Activated T-helper 2 cell treated with anti-CD3 and anti-CD28 coated beads, Interferon-gamma antibody, Interleukin-2, Interleukin-4, amounts not matched to agents 10 μg/mL and 5 μg/mL and 100 μg/mL, durations not matched to agents 14 hours and 24 hours and 36 hours (primary cell): ENCODE measurements at regions of chr11 and their contacts with region 1.

Region 1: DNA sequence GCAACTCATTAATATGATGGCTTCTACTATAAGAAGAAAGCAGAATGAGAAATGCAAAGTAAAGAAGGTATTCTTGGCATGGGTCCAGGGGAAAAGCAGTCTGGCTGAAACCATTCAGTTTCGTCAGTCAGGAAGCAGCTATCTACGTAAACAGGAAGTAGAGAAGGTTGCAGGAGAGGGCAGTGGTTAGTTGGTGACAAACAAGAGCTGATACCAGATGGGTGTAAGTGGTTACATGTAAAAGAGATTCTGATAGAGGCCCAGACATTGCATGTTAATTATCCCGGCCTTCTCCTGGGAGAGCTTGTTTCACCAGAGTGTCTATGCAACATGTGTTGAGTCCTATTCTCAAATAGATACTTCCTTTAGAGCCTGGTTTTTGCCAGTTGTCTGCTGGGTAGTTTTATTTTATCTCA is 58.4 kb upstream of the PSMA1 start:
- DNase-seq: peak; percentile 71
- H3K4me3 Mint-ChIP-seq: peak overlapping the region; percentile 42
- H3K27ac Mint-ChIP-seq: peak overlapping the region; percentile 87
- H3K4me1 Mint-ChIP-seq: peaks cover 45% of the 10 kb centered on the region
- H3K27me3 Mint-ChIP-seq: no peaks in the 10 kb centered on the region

Region 2: GRCh38 chr11:14336507-14337503 is 241.7 kb before region 1 on chr11:
- intact Hi-C with region 1: loop called (anchors 5 kb)
- DNase-seq: no peak
- H3K4me3 Mint-ChIP-seq: no peak overlapping the region
- H3K27ac Mint-ChIP-seq: peak overlapping the region; percentile 80
- H3K4me1 Mint-ChIP-seq: peaks cover 47% of the 10 kb centered on the region
- H3K27me3 Mint-ChIP-seq: no peaks in the 10 kb centered on the region

Region 3: DNA sequence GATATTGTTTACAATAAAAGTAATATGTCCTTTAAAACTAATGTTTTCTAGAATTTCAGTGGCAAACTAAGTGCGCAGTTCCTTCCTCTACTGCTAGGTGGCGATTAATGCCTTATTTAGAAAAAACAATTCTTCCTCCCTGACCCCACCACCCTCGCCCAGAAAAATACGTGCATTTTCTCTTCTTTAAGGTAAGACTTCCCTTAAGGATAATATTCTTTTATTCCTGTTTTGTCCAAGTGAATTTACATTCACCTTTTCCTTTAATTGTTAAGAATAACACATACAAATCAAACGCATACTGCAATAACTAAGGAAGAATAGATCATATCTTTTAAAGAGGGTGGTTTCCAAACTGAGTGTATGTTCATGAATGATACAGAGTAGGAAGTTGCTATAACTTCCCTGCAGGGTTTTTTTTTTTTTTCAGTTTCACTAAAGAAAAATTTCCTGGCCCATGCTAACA is 41.4 kb before region 1 on chr11:
- intact Hi-C with region 1: loop called (anchors 2 kb)
- DNase-seq: no peak
- H3K4me3 Mint-ChIP-seq: peak overlapping the region; percentile 63
- H3K27ac Mint-ChIP-seq: peak overlapping the region; percentile 74
- H3K4me1 Mint-ChIP-seq: peaks cover 28% of the 10 kb centered on the region
- H3K27me3 Mint-ChIP-seq: no peaks in the 10 kb centered on the region

Region 4: GRCh38 chr11:14611939-14612338 is 33.4 kb after region 1 on chr11:
- intact Hi-C with region 1: loop called (anchors 5 kb)
- DNase-seq: no peak
- H3K4me3 Mint-ChIP-seq: no peak overlapping the region
- H3K27ac Mint-ChIP-seq: peak overlapping the region; percentile 54
- H3K4me1 Mint-ChIP-seq: peaks cover 24% of the 10 kb centered on the region
- H3K27me3 Mint-ChIP-seq: no peaks in the 10 kb centered on the region

Region 5: DNA sequence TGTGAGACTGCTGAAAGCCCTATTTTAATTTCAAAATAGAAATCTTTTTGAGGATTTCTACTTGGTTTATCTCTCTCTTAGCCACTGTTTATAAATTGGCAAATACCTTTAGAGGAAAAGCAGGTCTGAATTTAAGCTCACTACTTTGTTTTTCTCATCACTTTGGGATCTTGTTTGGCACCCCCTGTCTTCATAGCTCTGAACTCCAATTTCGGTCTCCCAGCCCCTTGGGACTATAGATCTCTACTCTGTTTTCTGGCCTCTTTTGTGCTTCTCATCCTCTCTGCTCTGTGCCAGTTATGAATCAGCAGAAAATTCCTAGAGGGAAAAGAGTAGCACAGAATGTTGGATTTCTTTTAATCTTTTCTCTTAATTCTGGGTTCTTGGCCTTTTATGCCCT is 195.2 kb after region 1 on chr11:
- intact Hi-C with region 1: no loop called
- DNase-seq: no peak
- H3K4me3 Mint-ChIP-seq: no peak overlapping the region
- H3K27ac Mint-ChIP-seq: no peak overlapping the region
- H3K4me1 Mint-ChIP-seq: peaks cover 39% of the 10 kb centered on the region
- H3K27me3 Mint-ChIP-seq: no peaks in the 10 kb centered on the region

Region 6: GRCh38 chr11:14819596-14819995 is 241.0 kb after region 1 on chr11:
- intact Hi-C with region 1: no loop called
- DNase-seq: no peak
- H3K4me3 Mint-ChIP-seq: no peak overlapping the region
- H3K27ac Mint-ChIP-seq: no peak overlapping the region
- H3K4me1 Mint-ChIP-seq: peaks cover 7% of the 10 kb centered on the region
- H3K27me3 Mint-ChIP-seq: no peaks in the 10 kb centered on the region

Region 7: DNA sequence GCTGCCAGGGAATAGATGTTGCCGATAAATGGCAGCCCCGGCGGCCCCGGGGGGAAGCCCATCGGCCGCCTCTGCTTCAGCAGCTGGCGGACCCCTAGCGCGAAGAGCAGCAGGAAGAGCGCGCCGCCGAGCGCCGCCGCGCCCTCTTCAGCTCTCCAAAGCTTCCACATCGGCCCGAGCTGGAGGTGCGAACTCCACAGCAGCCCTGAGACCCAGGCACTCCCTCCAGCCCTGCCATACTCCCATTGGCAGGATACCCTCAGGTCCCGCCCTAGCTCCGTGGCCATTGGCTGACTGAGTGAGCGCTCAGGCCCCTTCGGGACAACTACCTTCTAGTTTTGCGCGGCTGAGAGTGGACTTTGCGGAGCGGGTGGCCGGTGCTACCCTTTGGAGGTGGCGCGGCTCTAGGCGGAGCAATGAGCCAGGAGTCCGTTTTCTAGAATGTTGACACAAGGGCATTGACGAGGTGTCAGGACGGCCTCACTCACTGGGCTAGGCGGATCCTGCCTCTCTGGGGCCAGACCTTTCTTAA is 313.6 kb after region 1 on chr11 and contains the start of gene CYP2R1:
- intact Hi-C with region 1: loop called (anchors 1 kb)
- DNase-seq: peak; percentile 89
- H3K4me3 Mint-ChIP-seq: peak within 1 kb of the TSS; percentile 88
- H3K27ac Mint-ChIP-seq: peak within 1 kb of the TSS; percentile 98
- H3K4me1 Mint-ChIP-seq: peaks cover 53% of the 10 kb centered on the region
- H3K27me3 Mint-ChIP-seq: no peaks in the 10 kb centered on the region
- total RNA-seq, gene CYP2R1: 18.2 and 20.8 TPM in 2 replicates